ENCODE measurements at regions of chr3 and their contacts with region 1.

Region 1: GRCh38 chr3:44712455-44713075 is at the start of gene ZNF502:
- DNase-seq: peak; percentile 88
- H3K4me3 ChIP-seq: peak within 1 kb of the TSS; percentile 73 to 75
- H3K27ac ChIP-seq: peak within 1 kb of the TSS; percentile 53 to 75
- H3K4me1 ChIP-seq: no peaks in the 10 kb centered on the region
- H3K27me3 ChIP-seq: no peaks in the 10 kb centered on the region
- CTCF ChIP-seq: peak in 2 of 4 experiments; percentile 58 to 59
- POLR2A ChIP-seq: no peak
- total RNA-seq, gene ZNF502: 6.5 to 9.6 TPM

Region 2: GRCh38 chr3:44323341-44323955 is 389.1 kb before region 1 on chr3:
- intact Hi-C with region 1: loop called (anchors 10 kb)
- DNase-seq: peak; percentile 71
- H3K4me3 ChIP-seq: no peak overlapping the region
- H3K27ac ChIP-seq: no peak overlapping the region
- H3K4me1 ChIP-seq: peaks cover 5% of the 10 kb centered on the region
- H3K27me3 ChIP-seq: no peaks in the 10 kb centered on the region
- CTCF ChIP-seq: peak; percentile 68 to 81 (median 74)
- POLR2A ChIP-seq: no peak

Region 3: DNA sequence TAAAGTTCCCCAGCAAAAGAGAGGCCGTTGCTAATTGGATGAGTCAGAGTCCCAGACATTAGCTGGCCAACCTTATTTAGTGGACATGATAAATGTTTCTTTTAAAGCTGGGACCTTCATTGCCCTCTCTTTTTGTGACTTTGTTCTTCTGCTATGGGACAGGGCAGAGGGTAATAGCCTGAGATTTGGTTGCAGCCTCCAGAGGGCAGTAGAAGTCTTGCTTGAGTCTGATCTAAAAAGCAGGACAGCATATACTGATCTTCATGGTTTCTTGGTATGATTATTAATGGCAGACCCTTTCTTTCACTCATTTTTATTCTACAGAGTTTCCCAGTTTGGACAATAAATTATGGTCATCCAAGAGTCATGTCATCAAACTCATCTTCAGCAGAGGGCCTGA is 182.6 kb before region 1 on chr3:
- intact Hi-C with region 1: loop called (anchors 10 kb)
- DNase-seq: no peak
- H3K4me3 ChIP-seq: no peak overlapping the region
- H3K27ac ChIP-seq: no peak overlapping the region
- H3K4me1 ChIP-seq: no peaks in the 10 kb centered on the region
- H3K27me3 ChIP-seq: no peaks in the 10 kb centered on the region
- CTCF ChIP-seq: no peak
- POLR2A ChIP-seq: no peak

Region 4: GRCh38 chr3:44729384-44729910 is 16.9 kb after region 1 on chr3 and contains the start of gene ZNF501:
- intact Hi-C with region 1: loop called (anchors 1 kb)
- DNase-seq: peak; percentile 92
- H3K4me3 ChIP-seq: peak within 1 kb of the TSS; percentile 72 to 73
- H3K27ac ChIP-seq: peak within 1 kb of the TSS; percentile 48 to 58
- H3K4me1 ChIP-seq: no peaks in the 10 kb centered on the region
- H3K27me3 ChIP-seq: no peaks in the 10 kb centered on the region
- CTCF ChIP-seq: peak in 1 of 4 experiments; percentile 12
- POLR2A ChIP-seq: peak; percentile 55
- total RNA-seq, gene ZNF501: 9.7 to 23.6 TPM

Region 5: DNA sequence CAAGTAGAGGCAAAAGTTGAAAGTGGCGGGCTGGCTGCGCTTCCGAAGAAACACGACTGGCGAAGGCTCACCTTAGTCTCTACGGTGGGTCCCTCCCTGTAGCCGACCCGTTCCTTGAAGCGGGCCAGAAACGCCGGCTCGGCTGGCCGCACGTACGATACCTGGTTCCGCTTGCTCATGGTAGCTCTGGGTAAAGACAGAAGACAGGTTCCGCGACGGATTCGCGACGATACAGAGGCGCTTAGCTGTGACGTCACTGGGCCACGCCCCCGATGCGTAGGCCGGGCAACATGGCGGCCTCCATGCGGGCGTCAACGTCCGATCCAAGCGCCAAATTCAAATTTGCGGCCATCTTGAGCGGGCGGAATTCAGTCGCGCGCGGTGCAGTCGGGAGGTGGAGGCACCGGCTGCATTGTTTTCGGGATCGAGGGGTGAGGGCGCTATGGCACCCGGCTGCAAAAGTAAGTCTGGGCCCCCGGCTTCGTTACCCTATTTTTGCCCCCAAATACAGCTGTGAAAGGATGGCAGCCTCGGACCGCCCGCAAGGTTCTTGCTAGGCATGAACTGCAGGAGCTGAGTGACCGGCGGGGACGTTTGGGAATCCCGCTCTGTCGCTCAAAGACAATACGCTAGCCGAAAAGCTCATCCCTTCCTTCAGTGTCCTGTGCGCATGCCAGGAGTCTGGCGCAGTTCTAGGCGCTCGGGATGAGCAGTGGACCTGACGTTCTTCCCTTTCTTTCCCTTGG is 49.0 kb after region 1 on chr3 and contains the starts of genes KIAA1143 and KIF15:
- intact Hi-C with region 1: loop called (anchors 5 kb)
- DNase-seq: peak; percentile 94
- H3K4me3 ChIP-seq: peak within 1 kb of the TSS; percentile 64 to 77
- H3K27ac ChIP-seq: peak within 1 kb of the TSS; percentile 63 to 71
- H3K4me1 ChIP-seq: peaks cover 3% of the 10 kb centered on the region
- H3K27me3 ChIP-seq: no peaks in the 10 kb centered on the region
- CTCF ChIP-seq: peak in 2 of 4 experiments; percentile 14 to 27
- POLR2A ChIP-seq: peak; percentile 33
- total RNA-seq, gene KIAA1143: 23.6 to 24.4 TPM
- total RNA-seq, gene KIF15: 0.55 to 4.8 TPM